Esophagus squamous epithelium (tissue), 5 donors: ENCODE measurements at regions of chr4 and their contacts with region 1.

Region 1: GRCh38 chr4:153142700-153143438 is 61.4 kb upstream of the TRIM2 start:
- DNase-seq: no peak
- H3K4me3 ChIP-seq: peak overlapping the region in 1 of 4 donors; percentile 40
- H3K27ac ChIP-seq: no peak overlapping the region
- H3K4me1 ChIP-seq: peaks cover 0 to 16% (median 6%) of the 10 kb centered on the region in 3 donors
- H3K27me3 ChIP-seq: no peaks in the 10 kb centered on the region
- CTCF ChIP-seq: peak; percentile 46 to 82 (median 79)
- POLR2A ChIP-seq: no peak

Region 2: GRCh38 chr4:152894673-152895072 is 248.2 kb before region 1 on chr4:
- intact Hi-C with region 1: no loop called
- DNase-seq: no peak
- H3K4me3 ChIP-seq: no peak overlapping the region
- H3K27ac ChIP-seq: no peak overlapping the region
- H3K4me1 ChIP-seq: peaks cover 0 to 10% (median 0%) of the 10 kb centered on the region in 3 donors
- H3K27me3 ChIP-seq: no peaks in the 10 kb centered on the region
- CTCF ChIP-seq: no peak
- POLR2A ChIP-seq: no peak

Region 3: GRCh38 chr4:153318696-153319320 is 175.9 kb after region 1 on chr4:
- intact Hi-C with region 1: loop called (anchors 5 kb)
- DNase-seq: no peak
- H3K4me3 ChIP-seq: no peak overlapping the region
- H3K27ac ChIP-seq: no peak overlapping the region
- H3K4me1 ChIP-seq: no peaks in the 10 kb centered on the region
- H3K27me3 ChIP-seq: no peaks in the 10 kb centered on the region
- CTCF ChIP-seq: peak; percentile 28 to 77 (median 63)
- POLR2A ChIP-seq: no peak

Region 4: DNA sequence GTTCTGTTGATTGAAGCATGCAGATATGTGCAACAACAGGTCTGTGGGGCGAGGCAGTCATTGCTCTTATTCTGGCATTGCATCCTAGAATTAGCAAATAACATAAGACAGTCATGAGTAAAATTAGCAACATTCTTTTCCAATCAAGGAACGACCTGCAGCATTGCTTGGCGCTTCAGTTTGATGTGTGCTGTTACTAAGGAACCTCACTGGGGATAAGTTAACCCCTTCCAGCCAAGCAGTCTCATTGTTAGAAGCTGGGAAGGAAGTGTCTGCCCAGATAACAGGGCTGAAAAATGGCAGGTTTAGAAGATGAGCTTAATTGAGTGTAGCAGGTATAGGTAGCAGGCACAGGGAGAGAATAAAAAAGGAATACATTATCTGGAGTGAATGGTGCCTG is 1693.6 kb after region 1 on chr4:
- intact Hi-C with region 1: no loop called
- DNase-seq: no peak
- H3K4me3 ChIP-seq: no peak overlapping the region
- H3K27ac ChIP-seq: no peak overlapping the region
- H3K4me1 ChIP-seq: no peaks in the 10 kb centered on the region
- H3K27me3 ChIP-seq: no peaks in the 10 kb centered on the region
- CTCF ChIP-seq: no peak
- POLR2A ChIP-seq: no peak